ENCODE measurements at regions of chr9 and their contacts with region 1.

Region 1: DNA sequence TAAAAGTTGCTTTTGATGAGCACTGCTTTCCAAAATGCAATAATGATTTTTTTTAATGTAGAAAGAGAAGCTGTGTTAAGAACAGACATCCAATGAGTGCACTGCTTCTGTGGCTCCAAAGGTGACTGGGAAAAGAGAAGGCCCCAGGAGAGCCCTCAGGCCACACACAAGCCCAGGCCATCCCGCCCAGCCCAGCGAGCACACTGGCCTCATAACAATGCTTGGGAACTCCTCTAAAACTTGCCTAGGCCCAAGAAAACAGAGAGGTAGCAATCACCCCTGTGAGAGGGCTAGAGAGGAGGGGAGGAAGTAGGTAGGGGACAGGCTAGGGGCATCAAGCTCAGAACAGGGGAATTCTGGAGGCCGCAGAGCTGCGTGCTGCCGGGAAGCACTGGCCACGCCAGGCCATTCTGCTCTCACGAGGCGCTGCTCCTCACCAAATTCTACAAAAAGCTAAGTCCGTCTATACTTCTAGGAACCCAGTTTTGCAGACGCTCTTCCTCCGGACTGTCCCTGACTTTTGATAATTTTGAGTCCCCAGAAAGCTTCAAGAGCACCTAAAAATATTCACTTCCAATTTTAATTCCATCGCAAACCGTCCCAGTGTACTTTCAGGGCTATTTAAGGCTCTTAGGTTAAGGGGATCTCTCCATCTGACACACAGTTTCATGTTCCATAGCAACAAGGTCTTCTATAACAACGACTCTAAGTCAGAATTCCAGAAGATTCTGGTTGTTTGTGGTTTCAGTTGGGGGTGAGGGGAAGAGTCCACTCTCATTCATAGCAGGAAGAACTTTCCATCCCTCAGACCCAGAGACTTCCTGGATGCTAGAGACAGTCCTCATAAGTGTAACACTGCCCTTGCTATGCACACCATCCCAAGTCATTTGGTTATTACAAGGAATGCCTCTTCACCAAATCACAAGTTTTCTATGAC is 51.0 kb downstream of the HABP4 start:
- DNase-seq: no peak
- H3K4me3 ChIP-seq: peak overlapping the region in 13 of 59 donors; percentile 34 to 67 (median 46)
- H3K27ac ChIP-seq: peak overlapping the region; percentile 62 to 98 (median 93)
- H3K27me3 ChIP-seq: no peaks in the 10 kb centered on the region
- CTCF ChIP-seq: no peak

Region 2: GRCh38 chr9:96555567-96556386 is 54.8 kb after region 1 on chr9:
- intact Hi-C with region 1: loop called in 1 of 2 experiments (anchors 5 kb)
- DNase-seq: no peak
- H3K4me3 ChIP-seq: peak overlapping the region in 16 of 59 donors; percentile 0 to 41 (median 11)
- H3K27ac ChIP-seq: peak overlapping the region in 58 of 59 donors; percentile 4 to 95 (median 88)
- H3K27me3 ChIP-seq: no peaks in the 10 kb centered on the region
- CTCF ChIP-seq: no peak

Region 3: DNA sequence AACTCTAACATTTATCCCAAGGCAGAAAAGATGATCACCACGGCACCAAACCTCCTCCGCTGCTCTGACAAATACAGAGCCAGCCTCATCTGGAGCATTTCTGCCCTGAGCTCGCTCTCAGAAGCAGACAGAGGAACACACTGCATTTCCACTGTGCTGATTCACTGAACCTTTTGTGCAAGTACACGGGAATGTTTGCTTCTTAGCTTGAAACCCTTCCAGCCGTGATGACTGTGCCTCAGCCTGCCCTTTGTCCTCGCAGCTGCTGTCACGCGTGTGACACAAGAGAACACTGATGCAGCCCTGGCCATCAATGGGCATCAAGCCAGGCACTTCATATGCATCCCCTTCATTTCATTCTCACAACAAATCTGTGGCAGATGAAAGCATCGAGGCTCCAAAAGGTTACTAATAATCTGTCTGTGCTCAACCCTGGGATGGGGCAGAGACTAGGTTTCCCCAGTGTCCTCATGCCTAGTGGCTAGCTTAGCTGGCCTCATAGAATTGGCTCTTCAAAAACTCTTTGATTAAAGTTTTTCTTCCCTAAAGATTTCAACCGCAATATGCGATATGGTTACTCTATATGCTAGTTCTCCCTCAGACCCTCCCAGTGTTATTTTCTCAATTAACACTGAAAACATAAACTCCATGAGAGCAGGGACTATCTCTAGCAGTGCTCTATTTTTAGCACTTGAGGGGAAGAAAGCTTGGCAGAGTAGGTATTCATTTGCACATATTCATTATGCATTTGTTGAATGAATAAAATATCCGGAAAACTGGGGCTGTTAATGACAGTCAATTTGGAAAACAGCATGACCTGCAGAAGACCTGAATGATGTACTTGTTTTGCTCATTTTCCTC is 111.4 kb after region 1 on chr9:
- intact Hi-C with region 1: loop called in 1 of 2 experiments (anchors 5 kb)
- DNase-seq: peak; percentile 35 to 94 (median 88)
- H3K4me3 ChIP-seq: peak overlapping the region in 57 of 59 donors; percentile 6 to 61 (median 41)
- H3K27ac ChIP-seq: peak overlapping the region; percentile 70 to 99 (median 94)
- H3K27me3 ChIP-seq: no peaks in the 10 kb centered on the region
- CTCF ChIP-seq: peak in 9 of 56 donors; percentile 9 to 37 (median 26)

Region 4: GRCh38 chr9:96619491-96620154 is 118.7 kb after region 1 on chr9 and contains the start of gene CDC14B:
- intact Hi-C with region 1: loop called (anchors 2 to 5 kb)
- DNase-seq: peak; percentile 56 to 96 (median 93)
- H3K4me3 ChIP-seq: peak within 1 kb of the TSS; percentile 56 to 93 (median 84)
- H3K27ac ChIP-seq: peak within 1 kb of the TSS; percentile 77 to 99 (median 95)
- H3K27me3 ChIP-seq: no peaks in the 10 kb centered on the region
- CTCF ChIP-seq: peak in 18 of 56 donors; percentile 0 to 47 (median 16)
- total RNA-seq, gene CDC14B: 28.9 to 134 (median 53.2) TPM

Region 5: GRCh38 chr9:96654443-96655197 is 153.7 kb after region 1 on chr9:
- intact Hi-C with region 1: loop called in 1 of 2 experiments (anchors 5 kb)
- DNase-seq: peak; percentile 46 to 85 (median 73)
- H3K4me3 ChIP-seq: peak overlapping the region; percentile 45 to 81 (median 70)
- H3K27ac ChIP-seq: peak overlapping the region; percentile 71 to 98 (median 93)
- H3K27me3 ChIP-seq: no peaks in the 10 kb centered on the region
- CTCF ChIP-seq: peak in 24 of 56 donors; percentile 8 to 52 (median 22)